ENCODE measurements at regions of chr12 and their contacts with region 1.

Region 1: DNA sequence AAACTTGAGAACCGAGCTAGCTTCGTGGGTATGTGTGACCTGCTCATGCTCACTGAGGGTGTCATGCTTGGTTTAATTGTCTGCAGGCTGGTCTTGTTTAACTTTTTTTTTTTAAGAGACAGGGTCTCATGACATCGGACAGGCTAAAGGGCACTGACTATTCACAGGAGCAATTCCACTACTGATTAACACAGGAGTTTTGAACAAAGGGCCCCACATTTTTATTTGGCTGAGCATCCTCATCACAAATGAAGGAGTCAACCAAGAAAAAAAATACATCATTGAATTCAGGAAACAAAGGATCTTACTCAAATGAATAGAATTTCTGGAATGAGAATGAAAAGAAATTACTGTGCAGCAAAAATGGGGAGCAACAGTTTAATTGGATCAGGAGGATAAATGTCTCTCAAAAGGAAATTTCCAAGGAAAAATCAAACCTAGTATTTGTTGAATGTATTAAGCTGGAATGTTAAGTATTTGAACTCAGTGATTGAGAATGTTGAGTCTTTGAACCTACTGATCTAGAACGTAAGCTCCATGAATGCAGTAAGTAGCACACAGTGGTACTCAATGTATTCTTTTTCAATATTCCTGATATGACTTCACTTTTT is 20.8 kb upstream of the PYROXD1 start:
- DNase-seq: no peak
- ATAC-seq: no peak
- H3K4me3 ChIP-seq: no peak overlapping the region
- H3K27ac ChIP-seq: no peak overlapping the region
- H3K4me1 ChIP-seq: no peaks in the 10 kb centered on the region
- H3K27me3 ChIP-seq: no peaks in the 10 kb centered on the region
- CTCF ChIP-seq: no peak
- POLR2A ChIP-seq: no peak
- RAD21 ChIP-seq: no peak

Region 2: DNA sequence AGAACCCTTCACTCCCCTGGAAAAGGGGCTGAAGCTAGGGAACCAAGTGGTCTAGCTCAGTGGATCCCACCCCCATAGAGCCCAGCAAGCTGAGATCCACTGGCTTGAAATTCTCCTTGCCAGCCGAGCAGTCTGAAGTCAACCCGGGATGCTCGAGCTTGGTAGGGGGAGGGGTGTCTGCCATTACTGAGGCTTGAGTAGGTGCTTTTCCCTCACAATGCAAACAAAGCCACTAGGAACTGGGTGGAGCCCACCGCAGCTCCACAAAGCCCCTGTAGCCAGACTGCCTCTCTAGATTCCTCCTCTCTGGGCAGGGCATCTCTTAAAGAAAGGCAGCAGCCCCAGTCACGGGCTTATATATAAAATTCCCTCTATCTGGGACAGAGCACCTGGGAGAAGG is 266.8 kb before region 1 on chr12:
- CTCF ChIA-PET with region 1: no interaction called
- POLR2A ChIA-PET with region 1: no interaction called
- RAD21 ChIA-PET with region 1: no interaction called
- intact Hi-C with region 1: no loop called
- DNase-seq: no peak
- ATAC-seq: no peak
- H3K4me3 ChIP-seq: no peak overlapping the region
- H3K27ac ChIP-seq: no peak overlapping the region
- H3K4me1 ChIP-seq: no peaks in the 10 kb centered on the region
- H3K27me3 ChIP-seq: no peaks in the 10 kb centered on the region
- CTCF ChIP-seq: no peak
- POLR2A ChIP-seq: no peak
- RAD21 ChIP-seq: no peak

Region 3: DNA sequence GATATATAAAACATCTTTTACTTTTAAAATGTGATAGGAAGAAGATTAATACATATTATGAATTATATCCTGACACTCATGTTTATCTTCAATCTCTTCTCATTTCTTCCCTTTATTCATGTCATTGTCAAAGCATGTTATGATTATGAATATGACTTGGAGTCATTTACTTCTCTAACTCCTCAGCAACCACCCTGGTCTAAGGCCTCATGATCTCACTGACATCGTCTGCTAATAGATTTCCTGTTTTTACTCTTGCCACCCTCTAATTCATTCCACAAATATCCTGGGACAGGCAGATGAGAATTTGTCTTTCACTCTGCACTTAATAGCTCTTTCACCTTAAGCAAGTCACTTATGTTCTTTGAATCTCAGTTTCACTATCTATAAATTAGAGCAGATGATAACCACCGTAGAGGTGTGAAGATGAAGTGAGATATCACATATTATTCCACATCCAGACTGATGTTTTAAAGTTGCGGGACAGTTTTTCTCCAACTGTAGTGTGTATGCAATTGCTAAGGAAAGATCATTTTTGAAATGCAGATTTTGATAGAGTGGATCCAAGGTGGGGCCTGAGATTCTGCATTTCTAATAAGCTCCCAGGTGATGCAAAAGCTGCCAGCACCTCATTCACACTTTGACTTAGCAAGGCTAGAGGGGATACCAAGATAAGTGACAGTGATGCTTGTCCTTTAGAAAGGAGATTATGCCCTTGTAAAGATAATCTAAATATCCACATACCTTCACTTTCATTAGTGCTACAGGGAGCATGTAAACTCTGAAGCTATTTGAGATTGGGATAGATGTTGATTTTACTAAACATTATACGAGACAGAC is 47.3 kb before region 1 on chr12:
- CTCF ChIA-PET with region 1: no interaction called
- POLR2A ChIA-PET with region 1: no interaction called
- RAD21 ChIA-PET with region 1: no interaction called
- intact Hi-C with region 1: loop called (anchors 10 kb)
- DNase-seq: no peak
- ATAC-seq: no peak
- H3K4me3 ChIP-seq: no peak overlapping the region
- H3K27ac ChIP-seq: no peak overlapping the region
- H3K4me1 ChIP-seq: no peaks in the 10 kb centered on the region
- H3K27me3 ChIP-seq: no peaks in the 10 kb centered on the region
- CTCF ChIP-seq: no peak
- POLR2A ChIP-seq: no peak
- RAD21 ChIP-seq: no peak

Measured in HCT116 (cell line).